ENCODE measurements at regions of chr13 and their contacts with region 1.

Region 1: GRCh38 chr13:99386911-99387788 is 80.0 kb upstream of the GPR183 start:
- DNase-seq: peak; percentile 89
- ATAC-seq: peak; percentile 68
- H3K4me3 ChIP-seq: no peak overlapping the region
- H3K4me3 Mint-ChIP-seq: peak overlapping the region; percentile 58
- H3K27ac ChIP-seq: peak overlapping the region; percentile 8 to 69
- H3K27ac Mint-ChIP-seq: peak overlapping the region; percentile 91
- H3K4me1 ChIP-seq: peaks cover 35 to 44% of the 10 kb centered on the region in 2 donors
- H3K4me1 Mint-ChIP-seq: peaks cover 46% of the 10 kb centered on the region
- H3K27me3 ChIP-seq: no peaks in the 10 kb centered on the region
- H3K27me3 Mint-ChIP-seq: no peaks in the 10 kb centered on the region
- CTCF ChIP-seq: peak; percentile 88

Region 2: DNA sequence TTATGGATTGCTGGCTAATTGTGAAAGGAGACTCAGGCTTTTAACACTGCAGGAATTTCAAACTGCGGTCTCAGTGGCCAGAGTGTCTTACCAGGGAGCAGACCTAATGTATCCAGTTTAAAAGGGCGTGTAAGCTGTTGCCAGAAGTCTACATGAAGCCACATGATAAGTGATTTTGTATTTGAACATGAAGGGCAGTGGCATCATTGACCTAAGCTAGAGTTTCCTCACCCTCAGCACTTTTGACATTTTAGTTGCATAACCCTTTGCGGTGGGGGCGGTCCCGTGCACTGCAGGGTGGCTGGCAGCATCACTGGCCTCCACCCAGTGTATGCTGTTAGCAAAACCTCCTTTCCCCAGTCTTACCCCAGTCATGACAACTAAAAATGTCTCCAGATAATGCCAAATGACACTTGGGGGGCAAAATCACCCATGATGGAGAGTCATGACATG is 105.3 kb before region 1 on chr13:
- CTCF ChIA-PET with region 1: interaction called, 477 read pairs
- POLR2A ChIA-PET with region 1: no interaction called
- intact Hi-C with region 1: no loop called
- DNase-seq: no peak
- ATAC-seq: peak; percentile 82
- H3K4me3 ChIP-seq: peak overlapping the region in 3 of 5 experiments; percentile 15 to 32 (median 31)
- H3K4me3 Mint-ChIP-seq: peak overlapping the region; percentile 73
- H3K27ac ChIP-seq: peak overlapping the region; percentile 85 to 89
- H3K27ac Mint-ChIP-seq: peak overlapping the region; percentile 95
- H3K4me1 ChIP-seq: peaks cover 87 to 88% of the 10 kb centered on the region in 2 donors
- H3K4me1 Mint-ChIP-seq: peaks cover 87% of the 10 kb centered on the region
- H3K27me3 ChIP-seq: no peaks in the 10 kb centered on the region
- H3K27me3 Mint-ChIP-seq: no peaks in the 10 kb centered on the region
- CTCF ChIP-seq: no peak

Region 3: GRCh38 chr13:99322297-99323103 is 64.7 kb before region 1 on chr13:
- CTCF ChIA-PET with region 1: interaction called, 17 read pairs
- POLR2A ChIA-PET with region 1: no interaction called
- intact Hi-C with region 1: no loop called
- DNase-seq: peak; percentile 46
- ATAC-seq: peak; percentile 78
- H3K4me3 ChIP-seq: no peak overlapping the region
- H3K4me3 Mint-ChIP-seq: peak overlapping the region; percentile 77
- H3K27ac ChIP-seq: peak overlapping the region; percentile 56 to 73
- H3K27ac Mint-ChIP-seq: peak overlapping the region; percentile 91
- H3K4me1 ChIP-seq: peaks cover 43 to 49% of the 10 kb centered on the region in 2 donors
- H3K4me1 Mint-ChIP-seq: peaks cover 58% of the 10 kb centered on the region
- H3K27me3 ChIP-seq: no peaks in the 10 kb centered on the region
- H3K27me3 Mint-ChIP-seq: no peaks in the 10 kb centered on the region
- CTCF ChIP-seq: no peak

Region 4: DNA sequence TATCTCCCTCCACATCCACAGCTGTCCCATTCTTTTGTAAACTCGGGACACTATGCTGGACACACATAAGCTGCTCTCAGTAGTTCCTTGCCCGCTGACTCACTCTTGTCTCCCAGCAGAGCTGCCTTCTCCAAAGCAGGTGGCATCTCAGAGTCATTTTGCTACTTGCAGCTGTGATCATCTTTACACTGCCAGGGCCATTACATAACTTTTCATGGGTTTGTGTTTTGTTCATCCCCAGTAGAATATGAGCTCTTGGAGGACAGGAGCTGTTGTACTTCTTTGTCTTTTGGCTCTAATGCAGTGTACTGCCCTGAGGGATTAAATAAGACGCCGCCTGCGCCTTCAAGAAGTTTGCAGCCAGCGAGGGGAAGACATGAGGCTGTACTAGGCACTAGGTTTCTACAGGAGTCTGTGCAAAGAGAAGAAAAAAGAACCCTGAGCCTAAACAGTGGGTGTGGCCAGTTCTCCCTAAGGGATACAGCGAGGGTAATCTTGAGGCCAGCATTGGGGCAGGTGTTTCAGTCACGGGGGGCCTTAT is 39.2 kb before region 1 on chr13:
- CTCF ChIA-PET with region 1: interaction called, 19 read pairs
- POLR2A ChIA-PET with region 1: interaction called, 3 read pairs
- intact Hi-C with region 1: loop called (anchors 5 kb)
- DNase-seq: peak; percentile 48
- ATAC-seq: peak; percentile 69
- H3K4me3 ChIP-seq: no peak overlapping the region
- H3K4me3 Mint-ChIP-seq: peak overlapping the region; percentile 57
- H3K27ac ChIP-seq: peak overlapping the region; percentile 13 to 17
- H3K27ac Mint-ChIP-seq: peak overlapping the region; percentile 92
- H3K4me1 ChIP-seq: peaks cover 19 to 43% of the 10 kb centered on the region in 2 donors
- H3K4me1 Mint-ChIP-seq: peaks cover 64% of the 10 kb centered on the region
- H3K27me3 ChIP-seq: no peaks in the 10 kb centered on the region
- H3K27me3 Mint-ChIP-seq: no peaks in the 10 kb centered on the region
- CTCF ChIP-seq: no peak

Region 5: GRCh38 chr13:99417201-99418102 is 30.3 kb after region 1 on chr13:
- CTCF ChIA-PET with region 1: interaction called, 31 read pairs
- POLR2A ChIA-PET with region 1: interaction called, 4 read pairs
- intact Hi-C with region 1: no loop called
- DNase-seq: no peak
- ATAC-seq: no peak
- H3K4me3 ChIP-seq: no peak overlapping the region
- H3K4me3 Mint-ChIP-seq: no peak overlapping the region
- H3K27ac ChIP-seq: no peak overlapping the region
- H3K27ac Mint-ChIP-seq: peak overlapping the region; percentile 67
- H3K4me1 ChIP-seq: peaks cover 51 to 58% of the 10 kb centered on the region in 2 donors
- H3K4me1 Mint-ChIP-seq: peaks cover 48% of the 10 kb centered on the region
- H3K27me3 ChIP-seq: peaks cover 0 to 3% (median 0%) of the 10 kb centered on the region in 4 experiments
- H3K27me3 Mint-ChIP-seq: no peaks in the 10 kb centered on the region
- CTCF ChIP-seq: no peak